ENCODE measurements at regions of chr6 and their contacts with region 1.

Region 1: GRCh38 chr6:11064836-11065235 is 20.7 kb upstream of the ELOVL2 start:
- DNase-seq: no peak
- H3K4me3 Mint-ChIP-seq: no peak overlapping the region
- H3K27ac Mint-ChIP-seq: no peak overlapping the region
- H3K4me1 Mint-ChIP-seq: peaks cover 17% of the 10 kb centered on the region
- H3K27me3 Mint-ChIP-seq: no peaks in the 10 kb centered on the region
- CTCF ChIP-seq: no peak

Region 2: GRCh38 chr6:10854922-10855632 is 209.8 kb before region 1 on chr6:
- CTCF ChIA-PET with region 1: interaction called, 3 read pairs
- intact Hi-C with region 1: loop called (anchors 5 kb)
- DNase-seq: no peak
- H3K4me3 Mint-ChIP-seq: no peak overlapping the region
- H3K27ac Mint-ChIP-seq: no peak overlapping the region
- H3K4me1 Mint-ChIP-seq: no peaks in the 10 kb centered on the region
- H3K27me3 Mint-ChIP-seq: no peaks in the 10 kb centered on the region
- CTCF ChIP-seq: no peak

Region 3: GRCh38 chr6:10954590-10955010 is 110.2 kb before region 1 on chr6:
- CTCF ChIA-PET with region 1: interaction called, 40 read pairs
- intact Hi-C with region 1: loop called (anchors 1 kb)
- DNase-seq: peak; percentile 81
- H3K4me3 Mint-ChIP-seq: no peak overlapping the region
- H3K27ac Mint-ChIP-seq: no peak overlapping the region
- H3K4me1 Mint-ChIP-seq: peaks cover 10% of the 10 kb centered on the region
- H3K27me3 Mint-ChIP-seq: no peaks in the 10 kb centered on the region
- CTCF ChIP-seq: peak; percentile 58

Region 4: DNA sequence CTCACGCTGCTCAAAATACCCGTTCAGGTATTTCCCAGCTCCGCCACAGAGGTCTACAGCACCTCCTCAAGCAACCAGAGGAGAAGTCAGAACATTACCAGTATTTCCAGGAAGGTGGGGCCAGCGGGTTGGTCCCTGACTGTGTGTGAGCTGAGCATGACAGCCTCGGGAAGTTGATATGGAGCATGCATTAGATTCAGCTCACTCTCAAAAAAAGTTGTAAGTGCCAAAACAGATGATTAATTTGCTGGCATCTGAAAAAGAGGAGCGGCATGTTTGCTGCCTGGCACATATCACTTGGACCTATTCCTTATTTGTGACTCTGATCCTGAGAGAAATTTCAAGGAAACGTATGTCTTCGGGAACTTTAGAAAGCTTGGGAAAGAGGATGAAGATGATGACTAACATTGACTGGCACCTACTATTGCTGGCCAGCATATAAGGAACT is 53.0 kb before region 1 on chr6:
- CTCF ChIA-PET with region 1: interaction called, 8 read pairs
- intact Hi-C with region 1: loop called (anchors 1 kb)
- DNase-seq: peak; percentile 53
- H3K4me3 Mint-ChIP-seq: no peak overlapping the region
- H3K27ac Mint-ChIP-seq: no peak overlapping the region
- H3K4me1 Mint-ChIP-seq: peaks cover 20% of the 10 kb centered on the region
- H3K27me3 Mint-ChIP-seq: no peaks in the 10 kb centered on the region
- CTCF ChIP-seq: no peak

Region 5: DNA sequence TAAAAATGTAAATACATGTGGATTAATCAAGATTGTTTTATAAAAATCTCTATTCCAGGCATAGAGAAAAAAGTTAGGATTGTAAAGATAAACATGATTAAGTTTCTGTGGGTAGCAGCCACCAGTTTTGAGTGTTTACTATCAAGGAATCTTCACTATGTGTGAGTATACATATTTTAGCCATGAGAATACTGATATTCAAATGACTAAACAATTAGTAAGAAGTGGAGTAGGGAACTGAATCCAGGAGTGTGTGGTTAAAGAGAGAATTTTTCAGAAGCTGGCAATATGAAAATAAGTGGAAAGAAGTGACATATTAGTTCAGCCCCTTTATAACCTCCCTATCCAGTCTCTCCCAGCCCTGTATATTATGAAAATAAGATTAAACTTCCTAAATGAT is 31.0 kb before region 1 on chr6:
- CTCF ChIA-PET with region 1: no interaction called
- intact Hi-C with region 1: no loop called
- DNase-seq: no peak
- H3K4me3 Mint-ChIP-seq: no peak overlapping the region
- H3K27ac Mint-ChIP-seq: no peak overlapping the region
- H3K4me1 Mint-ChIP-seq: peaks cover 18% of the 10 kb centered on the region
- H3K27me3 Mint-ChIP-seq: no peaks in the 10 kb centered on the region
- CTCF ChIP-seq: no peak

Measured in Calu3 (cell line).